MCF 10A (cell line): ENCODE measurements at regions of chr5 and their contacts with region 1.

Region 1: GRCh38 chr5:151684690-151685361 is 1.9 kb downstream of the SPARC start:
- DNase-seq: peak; percentile 88
- H3K4me3 Mint-ChIP-seq: peak overlapping the region; percentile 26
- H3K27ac Mint-ChIP-seq: peak overlapping the region; percentile 84
- H3K4me1 Mint-ChIP-seq: peaks cover 45% of the 10 kb centered on the region
- H3K27me3 Mint-ChIP-seq: no peaks in the 10 kb centered on the region
- CTCF ChIP-seq: peak; percentile 25

Region 2: DNA sequence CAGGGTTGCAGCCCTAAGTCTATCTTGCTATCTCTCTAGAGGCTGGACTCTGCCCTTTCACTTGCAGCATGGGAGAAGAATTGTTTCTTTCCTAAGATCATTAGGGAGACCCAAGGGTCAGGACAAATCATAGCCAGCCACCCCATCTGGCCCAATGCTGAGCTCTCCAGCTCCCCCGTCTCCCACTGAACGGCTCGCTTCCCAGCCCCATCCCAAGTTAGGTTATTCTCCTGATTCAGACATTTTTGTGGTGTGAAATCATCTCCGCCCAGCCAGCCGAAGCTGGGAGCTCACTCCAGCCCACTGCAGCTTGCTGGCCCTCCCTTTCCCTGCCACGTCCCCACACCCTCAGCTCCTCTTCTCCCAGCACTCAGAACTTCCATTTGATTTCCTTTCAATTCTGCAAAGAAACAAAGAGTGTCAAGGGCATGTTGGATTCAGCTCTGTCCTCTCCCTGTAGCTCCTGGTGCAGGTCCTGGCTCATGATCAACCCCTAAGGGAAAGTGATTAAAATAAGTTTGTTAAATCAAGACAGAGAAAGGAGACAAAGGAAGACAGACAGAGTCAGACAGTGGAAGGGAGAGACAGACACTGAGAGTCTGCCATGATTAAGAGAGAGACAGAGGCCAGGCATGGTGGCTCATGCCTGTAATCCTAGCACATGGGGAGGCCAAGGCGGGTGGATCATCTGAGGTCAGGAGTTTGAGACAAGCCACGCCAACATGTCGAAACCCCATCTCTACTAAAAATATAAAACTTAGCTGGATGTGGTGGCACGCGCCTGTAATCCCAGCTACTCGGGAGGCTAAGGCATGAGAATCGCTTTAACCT is 14.5 kb after region 1 on chr5:
- CTCF ChIA-PET with region 1: interaction called, 18 read pairs
- POLR2A ChIA-PET with region 1: interaction called, 6 read pairs
- intact Hi-C with region 1: no loop called
- DNase-seq: peak; percentile 85
- H3K4me3 Mint-ChIP-seq: peak overlapping the region; percentile 13
- H3K27ac Mint-ChIP-seq: peak overlapping the region; percentile 58
- H3K4me1 Mint-ChIP-seq: peaks cover 18% of the 10 kb centered on the region
- H3K27me3 Mint-ChIP-seq: no peaks in the 10 kb centered on the region
- CTCF ChIP-seq: no peak

Region 3: DNA sequence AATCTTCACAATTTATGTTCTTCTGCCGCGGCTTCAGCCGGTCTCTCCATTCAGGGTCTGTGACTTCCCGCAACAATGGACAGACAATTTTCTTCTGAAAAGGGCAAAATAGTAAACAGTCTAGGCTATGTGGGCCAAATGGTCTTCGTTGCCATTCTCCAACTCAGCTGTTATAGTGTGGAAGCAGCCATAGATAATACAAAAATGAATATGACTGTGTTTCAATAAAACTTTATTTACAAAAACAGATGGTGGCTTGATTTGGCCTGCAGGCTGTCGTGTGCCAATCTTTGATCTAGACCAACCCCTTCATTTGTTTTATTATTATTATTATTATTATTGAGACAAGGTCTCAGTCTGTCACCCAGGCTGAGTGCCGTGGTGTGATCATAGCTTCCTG is 45.6 kb after region 1 on chr5:
- CTCF ChIA-PET with region 1: no interaction called
- POLR2A ChIA-PET with region 1: no interaction called
- intact Hi-C with region 1: no loop called
- DNase-seq: no peak
- H3K4me3 Mint-ChIP-seq: no peak overlapping the region
- H3K27ac Mint-ChIP-seq: no peak overlapping the region
- H3K4me1 Mint-ChIP-seq: no peaks in the 10 kb centered on the region
- H3K27me3 Mint-ChIP-seq: no peaks in the 10 kb centered on the region
- CTCF ChIP-seq: no peak